GM12878 (cell line): ENCODE measurements at regions of chr5 and their contacts with region 1.

Region 1: DNA sequence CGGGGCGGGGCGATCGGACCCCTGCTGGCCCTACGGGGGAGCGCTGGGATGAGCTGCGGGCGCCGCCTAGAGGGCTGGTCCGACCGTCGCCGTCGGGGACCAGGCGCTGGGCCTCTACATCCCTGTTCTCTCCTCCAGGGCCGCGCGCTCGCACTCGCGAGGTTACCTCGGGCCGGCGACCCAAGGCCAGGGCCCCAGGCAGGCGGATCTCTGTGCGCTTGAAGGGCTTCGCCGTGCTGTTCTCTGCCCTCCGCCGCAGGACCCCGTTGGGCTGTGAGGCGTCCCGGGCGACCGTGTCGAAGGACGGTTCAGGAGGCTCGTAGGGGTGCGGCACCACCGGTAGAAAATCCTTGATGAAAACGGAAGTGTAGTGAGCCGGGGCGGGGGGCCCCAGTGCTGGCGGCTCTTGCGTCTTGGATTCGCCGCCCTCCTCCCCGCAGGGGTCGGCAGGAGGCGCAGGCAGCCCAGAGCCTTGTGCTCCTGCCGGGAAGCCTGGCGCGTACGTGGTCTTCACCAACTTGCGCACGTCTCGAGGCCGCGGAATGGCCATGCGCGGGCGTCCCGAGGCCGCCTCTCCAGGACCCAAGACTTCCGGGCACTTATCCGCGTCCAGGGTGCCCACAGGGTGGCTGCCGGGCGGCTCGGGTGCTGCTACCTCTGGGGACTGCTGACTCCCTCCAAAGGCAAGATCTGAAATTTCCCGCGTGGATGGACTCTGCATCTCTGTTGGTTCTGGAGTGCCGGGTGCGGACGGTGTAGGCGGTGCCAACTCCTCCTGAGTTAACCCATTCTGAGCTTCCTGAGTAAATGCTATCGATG is 2.0 kb downstream of the PROB1 start:
- DNase-seq: no peak
- ATAC-seq: peak; percentile 69
- H3K4me3 ChIP-seq: peak overlapping the region; percentile 87
- H3K27ac ChIP-seq: peak overlapping the region; percentile 90
- H3K4me1 ChIP-seq: peaks cover 49% of the 10 kb centered on the region
- H3K27me3 ChIP-seq: no peaks in the 10 kb centered on the region
- CTCF ChIP-seq: peak; percentile 89 to 98 (median 90)
- EP300 ChIP-seq: no peak
- POLR2A ChIP-seq: no peak
- RAD21 ChIP-seq: peak; percentile 76

Region 2: GRCh38 chr5:139078345-139078744 is 314.5 kb before region 1 on chr5:
- CTCF ChIA-PET with region 1: no interaction called
- POLR2A ChIA-PET with region 1: no interaction called
- RAD21 ChIA-PET with region 1: no interaction called
- SMC1A ChIA-PET with region 1: no interaction called
- in situ Hi-C with region 1: no loop called
- intact Hi-C with region 1: no loop called
- DNase-seq: no peak
- ATAC-seq: no peak
- H3K4me3 ChIP-seq: no peak overlapping the region
- H3K27ac ChIP-seq: no peak overlapping the region
- H3K4me1 ChIP-seq: peaks cover 8% of the 10 kb centered on the region
- H3K27me3 ChIP-seq: no peaks in the 10 kb centered on the region
- CTCF ChIP-seq: no peak
- EP300 ChIP-seq: no peak
- POLR2A ChIP-seq: no peak
- RAD21 ChIP-seq: no peak

Region 3: GRCh38 chr5:139197710-139198669 is 194.9 kb before region 1 on chr5 and contains the start of gene SIL1:
- CTCF ChIA-PET with region 1: no interaction called
- POLR2A ChIA-PET with region 1: no interaction called
- RAD21 ChIA-PET with region 1: no interaction called
- SMC1A ChIA-PET with region 1: no interaction called
- in situ Hi-C with region 1: no loop called
- intact Hi-C with region 1: loop called (anchors 5 kb)
- DNase-seq: peak; percentile 63
- ATAC-seq: peak; percentile 99
- H3K4me3 ChIP-seq: peak within 1 kb of the TSS; percentile 86
- H3K27ac ChIP-seq: peak within 1 kb of the TSS; percentile 97
- H3K4me1 ChIP-seq: peaks cover 4% of the 10 kb centered on the region
- H3K27me3 ChIP-seq: no peaks in the 10 kb centered on the region
- CTCF ChIP-seq: no peak
- EP300 ChIP-seq: no peak
- POLR2A ChIP-seq: peak; percentile 98
- RAD21 ChIP-seq: no peak
- polyA plus RNA-seq, gene SIL1: 4.1 to 8.2 TPM

Region 4: DNA sequence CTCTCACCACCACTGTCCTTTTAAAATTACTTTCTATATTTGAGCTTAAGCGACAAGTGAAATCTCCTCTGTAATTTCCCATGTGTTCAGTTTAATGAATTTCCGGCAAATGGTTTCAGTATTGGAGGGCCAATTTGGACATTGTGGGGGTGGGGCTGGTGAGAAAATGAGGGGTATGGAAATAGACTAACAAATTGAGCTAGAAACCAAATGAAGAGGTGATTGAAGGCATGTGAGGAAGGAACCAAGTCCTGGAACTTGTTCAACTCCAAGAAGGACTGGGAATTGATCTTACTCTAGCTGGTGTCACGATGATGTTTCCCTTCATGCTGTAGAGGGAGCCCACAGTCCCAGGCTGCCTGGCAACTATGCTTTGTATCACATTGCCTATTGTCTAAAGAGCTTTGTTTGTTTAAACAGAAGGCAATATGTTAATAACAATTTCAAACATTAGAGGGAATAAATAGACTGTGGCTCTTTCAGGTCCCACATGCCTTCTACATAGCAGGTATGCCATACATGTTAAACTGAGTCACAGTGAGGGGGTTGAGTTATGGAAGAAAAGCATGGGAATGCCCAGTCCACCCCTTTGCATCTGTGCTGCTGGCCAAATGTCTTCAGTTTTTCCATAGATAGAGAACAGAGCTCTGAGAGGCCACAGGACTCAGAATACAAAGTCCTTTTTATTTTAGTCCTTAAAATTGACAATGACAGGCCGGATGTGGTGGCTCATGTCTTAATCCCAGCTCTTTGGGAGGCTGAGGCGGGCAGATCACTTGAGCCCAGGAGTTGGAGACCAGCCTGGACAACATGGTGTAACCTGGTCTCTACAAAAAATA is 124.3 kb before region 1 on chr5:
- CTCF ChIA-PET with region 1: interaction called, 12 read pairs
- POLR2A ChIA-PET with region 1: interaction called, 13 read pairs
- RAD21 ChIA-PET with region 1: interaction called, 20 read pairs
- SMC1A ChIA-PET with region 1: interaction called, 12 read pairs
- in situ Hi-C with region 1: no loop called
- intact Hi-C with region 1: loop called (anchors 5 kb)
- DNase-seq: no peak
- ATAC-seq: peak; percentile 41
- H3K4me3 ChIP-seq: 0 out of 2 replicates have a peak overlapping the region, but pooled peaks have one; percentile 6
- H3K27ac ChIP-seq: peak overlapping the region; percentile 40
- H3K4me1 ChIP-seq: peaks cover 38% of the 10 kb centered on the region
- H3K27me3 ChIP-seq: no peaks in the 10 kb centered on the region
- CTCF ChIP-seq: peak; percentile 13 to 21 (median 14); a peak in 2 of 6 replicates
- EP300 ChIP-seq: no peak
- POLR2A ChIP-seq: no peak
- RAD21 ChIP-seq: peak; percentile 40; the same call in 1 of the 2 replicates

Region 5: DNA sequence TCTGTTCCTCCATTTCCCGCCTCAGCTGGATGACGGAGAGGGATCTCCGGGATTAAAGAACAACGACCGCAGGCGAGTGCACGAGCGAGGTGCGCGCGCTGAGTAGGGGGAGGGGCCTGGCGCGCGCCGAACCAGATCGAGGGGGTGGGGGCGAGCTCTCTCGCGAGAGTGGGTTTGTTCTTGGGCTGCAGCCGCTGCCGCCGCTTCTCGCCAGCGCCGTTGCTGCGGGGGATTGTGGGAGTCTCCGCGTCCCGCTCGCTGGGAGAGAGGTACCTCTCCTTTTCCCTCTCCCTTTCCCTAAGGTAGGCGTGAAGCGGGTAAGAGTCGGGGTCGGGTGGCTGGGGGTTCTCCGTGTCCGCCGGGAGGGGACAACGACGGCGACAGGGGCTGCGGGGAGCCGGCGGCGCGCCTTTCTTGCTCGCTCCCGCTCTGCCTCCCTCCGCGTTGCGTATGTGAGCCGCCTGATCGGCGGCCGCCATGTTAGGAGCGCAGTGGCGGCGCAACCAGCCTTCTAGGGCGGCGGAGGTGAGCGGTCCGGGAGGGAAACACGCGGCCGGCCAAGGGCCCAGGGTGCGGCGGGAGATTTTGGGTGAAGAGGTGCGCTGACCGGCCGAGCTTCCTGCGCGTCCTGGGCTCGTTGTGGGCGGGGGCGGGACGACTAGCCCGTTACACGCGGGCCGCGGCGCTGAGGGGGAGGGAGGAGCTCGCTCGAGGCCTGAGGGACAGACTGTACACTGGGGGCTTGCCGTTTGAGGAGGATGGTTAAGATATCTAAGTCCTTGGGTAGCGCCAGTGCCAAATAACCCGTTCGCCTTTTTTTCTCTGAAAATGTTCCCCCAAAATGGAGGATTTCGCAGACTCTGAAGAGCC is 99.1 kb before region 1 on chr5 and contains the start of gene MATR3:
- CTCF ChIA-PET with region 1: interaction called, 8 read pairs
- POLR2A ChIA-PET with region 1: interaction called, 61 read pairs
- RAD21 ChIA-PET with region 1: interaction called, 10 read pairs
- SMC1A ChIA-PET with region 1: interaction called, 6 read pairs
- in situ Hi-C with region 1: no loop called
- intact Hi-C with region 1: loop called (anchors 5 kb)
- DNase-seq: peak; percentile 74
- ATAC-seq: peak; percentile 84
- H3K4me3 ChIP-seq: peak within 1 kb of the TSS; percentile 89
- H3K27ac ChIP-seq: peak within 1 kb of the TSS; percentile 98
- H3K4me1 ChIP-seq: peaks cover 11% of the 10 kb centered on the region
- H3K27me3 ChIP-seq: no peaks in the 10 kb centered on the region
- CTCF ChIP-seq: no peak
- EP300 ChIP-seq: peak in 1 of 2 experiments; percentile 48; a peak in 1 of 4 replicates
- POLR2A ChIP-seq: peak; percentile 98
- RAD21 ChIP-seq: no peak
- polyA plus RNA-seq, gene MATR3: 149 to 187 TPM

Region 6: DNA sequence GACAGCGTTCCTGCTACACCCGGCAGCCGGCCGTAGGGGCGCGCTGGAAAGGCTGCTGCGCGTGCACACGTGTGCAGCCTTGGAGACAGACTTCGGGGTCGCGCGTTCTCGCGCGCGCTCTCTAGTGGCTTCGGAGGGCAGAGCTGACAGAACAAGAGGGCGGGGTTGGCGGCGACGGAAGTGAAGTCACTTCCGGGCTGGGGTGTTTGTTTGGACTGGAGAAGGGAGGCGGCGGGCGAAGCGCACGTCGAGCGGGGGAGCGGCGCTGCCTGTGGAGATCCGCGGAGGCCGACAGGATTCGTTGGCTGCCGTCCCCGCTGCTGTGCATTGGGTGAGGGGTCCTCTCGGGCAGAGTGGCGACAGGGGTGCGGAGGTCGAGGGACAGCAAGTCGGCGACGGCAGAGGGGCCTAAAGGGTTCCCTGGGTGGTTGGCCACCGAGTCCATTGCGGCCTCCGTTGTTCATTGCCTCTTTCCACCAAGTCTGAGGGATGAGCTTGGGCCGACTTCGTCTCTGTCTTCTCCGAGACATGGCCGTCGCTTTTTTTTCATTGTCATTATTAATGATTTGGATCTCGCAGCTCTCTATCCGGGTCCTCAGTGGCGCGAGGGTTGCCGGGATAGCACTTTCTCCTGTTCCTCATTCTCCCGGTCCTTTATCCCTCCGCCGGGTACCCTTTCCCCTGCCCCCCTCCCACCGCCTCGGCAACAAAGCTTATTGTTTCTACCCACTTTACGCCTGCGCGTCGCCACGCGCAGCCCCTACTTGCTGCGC is 51.1 kb before region 1 on chr5 and contains the start of gene PAIP2:
- CTCF ChIA-PET with region 1: interaction called, 12 read pairs
- POLR2A ChIA-PET with region 1: interaction called, 51 read pairs
- RAD21 ChIA-PET with region 1: interaction called, 42 read pairs
- SMC1A ChIA-PET with region 1: interaction called, 12 read pairs
- in situ Hi-C with region 1: no loop called
- intact Hi-C with region 1: loop called (anchors 2 kb)
- DNase-seq: peak; percentile 90
- ATAC-seq: peak; percentile 89
- H3K4me3 ChIP-seq: peak within 1 kb of the TSS; percentile 93
- H3K27ac ChIP-seq: peak within 1 kb of the TSS; percentile 92
- H3K4me1 ChIP-seq: peaks cover 11% of the 10 kb centered on the region
- H3K27me3 ChIP-seq: no peaks in the 10 kb centered on the region
- CTCF ChIP-seq: peak; percentile 90 to 96 (median 90)
- EP300 ChIP-seq: peak in 1 of 2 experiments; percentile 30; a peak in 1 of 4 replicates
- POLR2A ChIP-seq: peak; percentile 97
- RAD21 ChIP-seq: peak; percentile 58
- polyA plus RNA-seq, gene PAIP2: 100 to 113 TPM

Region 7: DNA sequence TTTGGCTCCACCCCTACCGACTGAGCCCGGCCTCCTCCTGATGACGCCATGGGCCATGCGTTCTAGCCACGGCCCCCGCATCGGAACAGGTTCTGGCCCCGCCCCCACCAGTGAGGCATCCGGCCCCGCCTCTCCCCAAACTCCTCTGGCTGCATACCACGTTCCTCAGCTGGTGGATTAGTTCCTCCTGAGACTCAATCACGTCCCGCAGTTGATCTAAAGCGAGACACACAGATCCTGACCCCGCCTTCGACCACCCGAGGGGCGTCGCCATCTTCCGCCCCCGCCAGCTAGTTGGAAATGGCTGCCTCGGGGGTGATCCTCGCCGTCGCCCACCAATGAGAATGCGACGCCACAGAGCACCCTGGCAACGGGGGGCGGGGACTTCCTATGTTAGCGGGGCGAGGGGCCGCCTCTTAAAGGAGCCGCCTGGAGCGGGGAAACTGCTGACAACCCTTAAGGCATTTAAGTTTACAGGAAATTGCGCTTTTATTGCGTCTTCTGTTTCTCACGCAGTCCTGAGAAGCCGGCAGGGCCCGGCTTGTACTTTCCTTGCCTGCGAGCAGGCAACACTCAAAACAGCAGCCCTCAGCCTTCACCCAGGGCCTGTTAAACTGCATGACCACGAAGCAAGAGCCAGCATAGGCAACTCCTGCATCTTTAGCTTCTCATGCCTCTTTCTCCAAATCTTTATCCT is 11.0 kb after region 1 on chr5 and contains the start of gene SPATA24:
- CTCF ChIA-PET with region 1: interaction called, 26 read pairs
- POLR2A ChIA-PET with region 1: interaction called, 74 read pairs
- RAD21 ChIA-PET with region 1: interaction called, 14 read pairs
- SMC1A ChIA-PET with region 1: interaction called, 19 read pairs
- in situ Hi-C with region 1: no loop called
- intact Hi-C with region 1: no loop called
- DNase-seq: peak; percentile 95
- ATAC-seq: peak; percentile 86
- H3K4me3 ChIP-seq: peak within 1 kb of the TSS; percentile 74
- H3K27ac ChIP-seq: peak within 1 kb of the TSS; percentile 83
- H3K4me1 ChIP-seq: peaks cover 30% of the 10 kb centered on the region
- H3K27me3 ChIP-seq: no peaks in the 10 kb centered on the region
- CTCF ChIP-seq: no peak
- EP300 ChIP-seq: 0 out of 4 replicates have a peak, but pooled peaks of 1 of the 2 experiments have one; percentile 14
- POLR2A ChIP-seq: peak; percentile 78
- RAD21 ChIP-seq: no peak
- polyA plus RNA-seq, gene SPATA24: 7.6 to 8.5 TPM

Region 8: DNA sequence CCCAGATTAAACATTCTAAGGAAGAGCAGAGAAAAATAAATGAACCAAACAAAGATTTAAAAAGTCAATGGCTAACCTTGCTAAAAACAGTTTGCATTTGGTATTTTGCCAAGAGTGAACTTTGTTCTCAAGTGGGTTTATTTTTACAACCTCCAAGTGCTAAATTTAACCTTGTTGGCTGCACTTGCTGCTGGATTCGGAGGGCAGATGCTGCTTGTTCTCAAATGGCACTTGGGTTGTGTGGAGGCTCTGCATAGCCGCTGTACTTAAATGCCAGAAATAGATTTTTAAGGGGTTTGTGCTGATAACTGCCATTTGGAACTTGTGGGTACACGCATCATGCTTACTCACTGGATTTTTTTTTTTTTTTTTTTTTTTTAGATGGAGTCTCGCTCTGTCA is 24.3 kb after region 1 on chr5:
- CTCF ChIA-PET with region 1: interaction called, 10 read pairs
- POLR2A ChIA-PET with region 1: interaction called, 4 read pairs
- RAD21 ChIA-PET with region 1: interaction called, 14 read pairs
- SMC1A ChIA-PET with region 1: interaction called, 15 read pairs
- in situ Hi-C with region 1: no loop called
- intact Hi-C with region 1: no loop called
- DNase-seq: no peak
- ATAC-seq: no peak
- H3K4me3 ChIP-seq: no peak overlapping the region
- H3K27ac ChIP-seq: no peak overlapping the region
- H3K4me1 ChIP-seq: peaks cover 21% of the 10 kb centered on the region
- H3K27me3 ChIP-seq: no peaks in the 10 kb centered on the region
- CTCF ChIP-seq: no peak
- EP300 ChIP-seq: no peak
- POLR2A ChIP-seq: no peak
- RAD21 ChIP-seq: no peak